ENCODE measurements at regions of chr6 and their contacts with region 1.

Region 1: GRCh38 chr6:35219683-35220326 is 6.0 kb downstream of the SCUBE3 start:
- DNase-seq: no peak
- H3K4me3 ChIP-seq: no peak overlapping the region
- H3K27ac ChIP-seq: no peak overlapping the region
- H3K4me1 ChIP-seq: no peaks in the 10 kb centered on the region
- H3K27me3 ChIP-seq: no peaks in the 10 kb centered on the region
- CTCF ChIP-seq: no peak
- EP300 ChIP-seq: no peak
- POLR2A ChIP-seq: no peak

Region 2: DNA sequence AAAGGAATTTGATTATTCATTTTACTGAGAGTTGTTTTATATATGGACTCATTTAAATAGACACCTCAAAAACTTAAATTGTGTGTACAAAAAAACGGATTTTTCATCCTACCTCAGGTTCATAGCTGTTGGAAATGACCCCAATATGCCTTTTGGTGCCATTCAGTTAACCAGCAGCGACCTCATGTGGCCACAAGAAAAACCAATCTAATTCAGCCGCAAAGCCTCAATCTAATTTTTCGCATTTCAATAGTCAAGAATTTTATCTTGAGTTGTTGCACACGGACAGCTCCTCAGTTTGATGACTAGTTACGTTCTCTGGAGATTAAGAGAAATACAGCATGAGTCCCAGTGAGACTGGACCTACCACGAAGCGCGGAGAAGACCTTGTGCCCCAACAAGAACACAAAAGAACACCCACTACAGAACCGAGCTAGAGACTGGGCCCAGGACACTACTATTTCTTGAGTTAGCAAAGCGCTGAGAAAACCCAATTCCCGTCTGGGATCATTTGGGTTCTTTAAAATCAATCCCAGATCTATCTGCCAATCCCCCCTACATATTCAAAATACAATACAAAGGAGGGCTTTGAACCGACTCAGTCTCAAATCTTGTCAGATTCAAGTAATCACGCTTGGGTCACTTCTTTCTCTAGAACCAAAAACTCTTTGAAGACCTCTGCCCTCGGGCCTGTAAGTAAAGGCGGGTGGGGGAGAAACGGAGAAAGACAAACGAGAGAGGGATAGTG is 79.7 kb before region 1 on chr6:
- intact Hi-C with region 1: no loop called
- DNase-seq: peak; percentile 53 to 71 (median 66)
- H3K4me3 ChIP-seq: no peak overlapping the region
- H3K27ac ChIP-seq: peak overlapping the region in 1 of 2 donors; percentile 51
- H3K4me1 ChIP-seq: peaks cover 2% of the 10 kb centered on the region
- H3K27me3 ChIP-seq: no peaks in the 10 kb centered on the region
- CTCF ChIP-seq: peak; percentile 82 to 89 (median 84)
- EP300 ChIP-seq: no peak
- POLR2A ChIP-seq: no peak

Region 3: DNA sequence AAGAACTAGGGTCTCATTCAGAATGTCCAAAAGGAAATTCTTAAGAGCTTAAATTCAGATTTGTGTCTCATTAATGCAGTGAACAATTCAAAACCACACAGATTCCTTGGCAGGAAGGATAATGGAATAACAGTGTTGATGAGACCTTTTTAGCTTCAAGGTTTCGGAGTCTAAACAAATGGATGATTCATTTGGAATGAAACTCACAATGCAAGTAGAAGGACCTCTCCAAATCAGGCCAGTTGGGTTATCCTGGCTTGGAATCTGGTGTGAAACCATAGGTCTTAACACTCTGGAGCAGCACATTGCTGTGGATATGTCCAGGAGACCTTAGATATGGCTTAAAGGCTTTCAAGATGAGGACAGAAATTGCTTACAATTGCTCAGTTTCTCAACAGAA is 1267.9 kb after region 1 on chr6:
- intact Hi-C with region 1: loop called in 1 of 4 experiments (anchors 5 kb)
- DNase-seq: no peak
- H3K4me3 ChIP-seq: no peak overlapping the region
- H3K27ac ChIP-seq: no peak overlapping the region
- H3K4me1 ChIP-seq: peaks cover 2% of the 10 kb centered on the region
- H3K27me3 ChIP-seq: no peaks in the 10 kb centered on the region
- CTCF ChIP-seq: no peak
- EP300 ChIP-seq: no peak
- POLR2A ChIP-seq: no peak